ENCODE measurements at regions of chr4 and their contacts with region 1.

Region 1: DNA sequence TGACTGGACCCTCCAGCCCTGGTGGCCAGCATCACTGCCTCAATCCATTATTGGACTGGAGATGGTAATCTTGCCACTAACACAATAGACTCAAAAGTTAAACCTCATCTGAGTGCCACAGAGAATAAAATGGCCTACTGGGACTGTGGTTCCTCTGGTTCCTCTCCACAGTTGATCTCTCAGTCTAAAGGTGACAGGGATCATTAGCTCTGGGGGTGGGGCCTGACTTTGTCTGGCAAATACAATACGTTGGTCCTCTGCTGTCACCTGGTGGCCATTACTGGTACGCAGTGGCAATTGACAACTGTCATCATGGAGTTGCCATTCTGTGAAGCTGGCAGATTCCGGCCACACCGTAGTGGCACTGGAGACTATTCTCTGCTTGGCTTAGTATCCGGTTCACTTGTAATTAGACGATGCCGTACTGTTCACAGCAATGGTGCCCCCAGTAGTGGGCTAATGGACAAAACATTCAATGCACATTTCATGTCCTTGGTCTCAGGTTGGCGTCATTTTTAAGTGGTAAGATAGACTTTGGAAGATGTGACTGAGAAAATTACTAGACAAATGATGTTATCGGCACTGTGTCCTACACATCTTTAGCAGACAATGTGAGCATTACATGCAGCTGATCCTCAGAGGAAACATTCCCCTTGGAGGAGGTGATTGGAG is 6.7 kb downstream of the FGFBP2 start:
- DNase-seq: peak in 9 of 10 donors; percentile 14 to 80 (median 54)
- H3K4me3 ChIP-seq: no peak overlapping the region
- H3K27ac ChIP-seq: no peak overlapping the region
- H3K27me3 ChIP-seq: peaks cover 0 to 3% (median 0%) of the 10 kb centered on the region in 45 donors
- CTCF ChIP-seq: peak; percentile 43 to 83 (median 75)

Region 2: GRCh38 chr4:15729910-15730533 is 226.3 kb before region 1 on chr4:
- intact Hi-C with region 1: loop called in 1 of 2 experiments (anchors 10 kb)
- DNase-seq: peak in 1 of 10 donors; percentile 6
- H3K4me3 ChIP-seq: no peak overlapping the region
- H3K27ac ChIP-seq: no peak overlapping the region
- H3K27me3 ChIP-seq: no peaks in the 10 kb centered on the region
- CTCF ChIP-seq: peak; percentile 78 to 99 (median 90)

Region 3: DNA sequence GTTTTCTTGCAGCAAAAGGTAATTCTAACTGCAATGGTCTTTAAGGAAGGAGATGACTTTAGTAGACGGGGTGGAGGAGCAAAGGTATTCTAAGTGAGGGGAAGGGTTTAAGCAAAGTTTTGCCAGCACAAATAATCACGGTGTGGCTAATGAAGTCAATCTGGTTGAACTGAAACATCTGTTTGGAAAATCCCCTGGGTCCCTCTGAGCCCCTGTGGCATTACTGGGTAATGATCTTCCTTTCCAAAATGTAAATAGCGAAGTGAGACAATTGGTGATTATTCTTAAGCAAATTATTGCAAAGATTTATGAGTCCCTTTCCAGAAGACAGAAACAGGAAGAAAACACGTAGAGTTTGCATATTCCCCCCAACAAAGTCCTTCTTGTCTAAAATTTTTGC is 65.0 kb before region 1 on chr4:
- intact Hi-C with region 1: loop called in 1 of 2 experiments (anchors 2 kb)
- DNase-seq: no peak
- H3K4me3 ChIP-seq: no peak overlapping the region
- H3K27ac ChIP-seq: no peak overlapping the region
- H3K27me3 ChIP-seq: peaks cover 0 to 2% (median 0%) of the 10 kb centered on the region in 45 donors
- CTCF ChIP-seq: no peak

Region 4: GRCh38 chr4:16079046-16079445 is 122.7 kb after region 1 on chr4:
- intact Hi-C with region 1: no loop called
- DNase-seq: no peak
- H3K4me3 ChIP-seq: no peak overlapping the region
- H3K27ac ChIP-seq: no peak overlapping the region
- H3K27me3 ChIP-seq: peaks cover 0 to 70% (median 33%) of the 10 kb centered on the region in 45 donors
- CTCF ChIP-seq: no peak

Region 5: GRCh38 chr4:16642895-16643294 is 686.6 kb after region 1 on chr4:
- intact Hi-C with region 1: no loop called
- DNase-seq: no peak
- H3K4me3 ChIP-seq: no peak overlapping the region
- H3K27ac ChIP-seq: peak overlapping the region in 29 of 59 donors; percentile 3 to 77 (median 50)
- H3K27me3 ChIP-seq: no peaks in the 10 kb centered on the region
- CTCF ChIP-seq: peak in 54 of 56 donors; percentile 17 to 67 (median 48)

Region 6: GRCh38 chr4:17327591-17327990 is 1371.3 kb after region 1 on chr4:
- intact Hi-C with region 1: no loop called
- DNase-seq: no peak
- H3K4me3 ChIP-seq: no peak overlapping the region
- H3K27ac ChIP-seq: peak overlapping the region in 4 of 59 donors; percentile 17 to 52 (median 45)
- H3K27me3 ChIP-seq: no peaks in the 10 kb centered on the region
- CTCF ChIP-seq: no peak